Heart left ventricle (tissue), 16 donors: ENCODE measurements at regions of chr7 and their contacts with region 1.

Region 1: GRCh38 chr7:147022056-147022455 is 905.5 kb downstream of the CNTNAP2 start:
- DNase-seq: no peak
- ATAC-seq: no peak
- H3K4me3 ChIP-seq: no peak overlapping the region
- H3K27ac ChIP-seq: no peak overlapping the region
- H3K4me1 ChIP-seq: no peaks in the 10 kb centered on the region
- H3K27me3 ChIP-seq: no peaks in the 10 kb centered on the region
- CTCF ChIP-seq: no peak
- POLR2A ChIP-seq: no peak

Region 2: GRCh38 chr7:147089051-147089461 is 67.0 kb after region 1 on chr7:
- intact Hi-C with region 1: loop called in 1 of 10 experiments (anchors 10 kb)
- DNase-seq: no peak
- ATAC-seq: no peak
- H3K4me3 ChIP-seq: no peak overlapping the region
- H3K27ac ChIP-seq: no peak overlapping the region
- H3K4me1 ChIP-seq: no peaks in the 10 kb centered on the region
- H3K27me3 ChIP-seq: no peaks in the 10 kb centered on the region
- CTCF ChIP-seq: no peak
- POLR2A ChIP-seq: no peak

Region 3: GRCh38 chr7:147406521-147407135 is 384.6 kb after region 1 on chr7:
- intact Hi-C with region 1: no loop called
- DNase-seq: no peak
- ATAC-seq: no peak
- H3K4me3 ChIP-seq: no peak overlapping the region
- H3K27ac ChIP-seq: no peak overlapping the region
- H3K4me1 ChIP-seq: no peaks in the 10 kb centered on the region
- H3K27me3 ChIP-seq: no peaks in the 10 kb centered on the region
- CTCF ChIP-seq: no peak
- POLR2A ChIP-seq: no peak